Activated CD8-positive, alpha-beta T cell treated with anti-CD3 and anti-CD28 coated beads, Interleukin-2, amount 10 ng/mL, durations not matched to agents 7 days and 5 days (primary cell): ENCODE measurements at regions of chr1 and their contacts with region 1.

Region 1: DNA sequence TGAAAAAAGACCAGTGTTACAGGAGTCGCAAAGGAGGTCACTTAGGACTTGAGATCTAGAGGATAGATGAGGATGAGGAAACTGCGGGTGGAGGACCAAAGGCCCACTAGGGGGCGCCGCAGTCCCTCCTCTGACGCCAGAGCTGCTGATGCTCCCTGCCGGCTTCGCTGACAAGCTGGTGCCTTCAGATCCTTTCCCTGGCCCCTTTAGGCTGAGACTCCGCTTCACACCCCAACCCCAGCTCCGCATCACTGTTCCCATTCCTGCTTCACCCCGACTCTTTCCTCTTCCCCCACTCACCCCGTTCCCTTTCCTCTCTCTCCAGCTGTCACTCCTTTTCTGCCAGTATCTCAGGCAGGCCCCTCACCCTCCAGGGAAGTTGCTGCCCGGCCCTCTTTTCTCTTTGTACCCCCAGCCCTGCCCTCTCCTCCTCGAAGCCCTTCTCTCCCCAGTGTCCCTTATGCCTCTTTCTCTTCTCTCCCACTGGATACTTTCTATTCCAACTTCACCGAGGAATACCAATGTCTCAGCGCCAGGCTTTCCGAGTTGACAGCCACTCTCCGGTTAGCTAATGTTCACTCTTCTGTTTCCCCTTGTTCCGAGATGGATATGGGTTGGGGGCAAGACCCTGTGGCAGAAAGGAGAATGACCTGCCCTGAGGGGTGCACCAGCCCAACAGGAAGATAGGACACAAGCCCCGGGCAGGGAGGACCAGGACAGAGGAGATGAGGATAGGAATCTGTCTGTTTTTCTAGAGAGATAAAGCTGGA is 4.5 kb downstream of the KCNJ9 start:
- DNase-seq: peak; percentile 87
- ATAC-seq: peak; percentile 76
- H3K4me3 Mint-ChIP-seq: no peak overlapping the region
- H3K27ac Mint-ChIP-seq: no peak overlapping the region
- H3K4me1 Mint-ChIP-seq: peaks cover 12% of the 10 kb centered on the region
- H3K27me3 Mint-ChIP-seq: peaks cover 20% of the 10 kb centered on the region

Region 2: DNA sequence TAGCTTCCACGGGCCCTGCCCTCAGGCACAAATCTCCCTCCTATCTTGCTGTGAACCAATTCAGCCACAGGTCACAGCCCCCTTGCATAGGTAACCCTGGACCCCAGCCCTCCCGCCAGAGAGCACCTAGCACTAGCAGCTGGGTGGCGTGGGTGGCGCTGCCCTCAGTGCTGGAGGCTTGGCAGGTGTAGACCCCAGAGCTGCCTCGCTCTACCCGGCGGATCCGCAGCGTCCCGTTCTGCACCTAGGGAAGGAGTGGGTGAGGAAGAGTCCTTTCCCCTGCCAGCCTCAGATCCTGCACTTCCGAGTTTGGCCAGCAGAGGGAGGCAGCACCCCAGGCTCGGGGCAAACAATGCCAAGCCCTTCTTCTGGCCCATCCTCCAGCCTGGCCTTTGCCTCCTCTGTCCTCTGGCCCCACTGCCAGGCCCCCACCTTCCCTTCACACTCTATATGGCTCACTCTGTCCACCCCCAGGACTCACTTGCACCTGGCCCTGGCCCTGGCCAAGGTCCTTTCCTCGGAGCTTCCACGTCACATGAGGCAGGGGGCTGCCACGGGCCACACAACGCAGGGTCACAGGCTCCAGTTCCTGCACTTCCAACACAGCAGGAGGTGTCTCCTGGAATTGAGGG is 149.5 kb before region 1 on chr1:
- CTCF ChIA-PET with region 1: interaction called, 10 read pairs
- POLR2A ChIA-PET with region 1: no interaction called
- DNase-seq: peak; percentile 83
- ATAC-seq: peak; percentile 81
- H3K4me3 Mint-ChIP-seq: no peak overlapping the region
- H3K27ac Mint-ChIP-seq: no peak overlapping the region
- H3K4me1 Mint-ChIP-seq: peaks cover 5% of the 10 kb centered on the region
- H3K27me3 Mint-ChIP-seq: peaks cover 29% of the 10 kb centered on the region

Region 3: GRCh38 chr1:160046494-160047110 is 39.3 kb before region 1 on chr1:
- CTCF ChIA-PET with region 1: interaction called, 617 read pairs
- POLR2A ChIA-PET with region 1: no interaction called
- DNase-seq: peak; percentile 61
- ATAC-seq: peak; percentile 96
- H3K4me3 Mint-ChIP-seq: peak overlapping the region; percentile 65
- H3K27ac Mint-ChIP-seq: peak overlapping the region; percentile 72
- H3K4me1 Mint-ChIP-seq: peaks cover 12% of the 10 kb centered on the region
- H3K27me3 Mint-ChIP-seq: peaks cover 28% of the 10 kb centered on the region

Region 4: DNA sequence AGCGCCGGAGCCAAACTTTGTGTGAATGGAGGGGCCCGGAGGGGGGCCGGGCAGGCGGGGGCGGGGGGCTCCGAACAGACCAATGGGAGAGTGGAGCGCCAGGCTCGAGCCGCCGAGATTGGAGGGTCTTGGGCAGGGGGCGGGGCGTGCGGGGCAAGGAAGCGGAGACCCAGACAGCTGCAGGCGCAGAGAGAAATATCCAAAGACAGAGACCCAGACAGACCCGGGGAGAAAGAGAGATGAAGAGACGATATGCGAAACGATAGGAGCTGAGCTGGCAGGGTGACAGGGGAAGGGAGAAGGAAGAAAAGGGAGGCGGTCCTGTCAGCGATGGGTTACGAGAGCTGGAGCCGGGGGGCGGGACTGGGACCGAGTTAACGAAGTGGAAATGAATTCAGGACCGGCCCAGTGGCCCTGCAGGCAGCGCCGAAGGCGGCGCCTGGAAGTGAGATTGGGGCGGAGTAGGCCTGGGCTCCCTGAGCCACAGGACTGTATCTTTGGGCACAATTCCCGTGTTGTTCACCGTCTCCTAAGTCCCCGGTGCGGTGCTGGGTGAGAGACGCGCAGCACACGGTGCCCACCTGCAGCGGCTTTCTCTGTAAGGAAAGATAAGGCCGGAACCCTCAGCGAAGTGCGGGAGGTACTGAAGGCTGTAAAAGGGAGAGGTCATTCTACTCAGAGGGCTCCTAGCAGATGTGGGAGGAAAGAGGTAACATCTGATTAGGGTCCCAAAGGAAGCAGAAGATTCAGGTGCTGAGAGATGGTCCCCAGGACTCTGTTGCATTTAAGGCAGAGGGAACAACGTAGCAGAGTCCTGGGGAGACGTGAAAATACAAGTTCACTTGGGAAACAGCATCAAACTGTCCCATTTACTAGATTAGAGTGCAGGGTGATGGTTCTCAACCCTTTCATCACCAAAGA is 15.4 kb before region 1 on chr1:
- CTCF ChIA-PET with region 1: interaction called, 617 read pairs
- POLR2A ChIA-PET with region 1: no interaction called
- DNase-seq: peak; percentile 67
- ATAC-seq: peak; percentile 91
- H3K4me3 Mint-ChIP-seq: peak overlapping the region; percentile 66
- H3K27ac Mint-ChIP-seq: no peak overlapping the region
- H3K4me1 Mint-ChIP-seq: peaks cover 14% of the 10 kb centered on the region
- H3K27me3 Mint-ChIP-seq: peaks cover 55% of the 10 kb centered on the region

Region 5: DNA sequence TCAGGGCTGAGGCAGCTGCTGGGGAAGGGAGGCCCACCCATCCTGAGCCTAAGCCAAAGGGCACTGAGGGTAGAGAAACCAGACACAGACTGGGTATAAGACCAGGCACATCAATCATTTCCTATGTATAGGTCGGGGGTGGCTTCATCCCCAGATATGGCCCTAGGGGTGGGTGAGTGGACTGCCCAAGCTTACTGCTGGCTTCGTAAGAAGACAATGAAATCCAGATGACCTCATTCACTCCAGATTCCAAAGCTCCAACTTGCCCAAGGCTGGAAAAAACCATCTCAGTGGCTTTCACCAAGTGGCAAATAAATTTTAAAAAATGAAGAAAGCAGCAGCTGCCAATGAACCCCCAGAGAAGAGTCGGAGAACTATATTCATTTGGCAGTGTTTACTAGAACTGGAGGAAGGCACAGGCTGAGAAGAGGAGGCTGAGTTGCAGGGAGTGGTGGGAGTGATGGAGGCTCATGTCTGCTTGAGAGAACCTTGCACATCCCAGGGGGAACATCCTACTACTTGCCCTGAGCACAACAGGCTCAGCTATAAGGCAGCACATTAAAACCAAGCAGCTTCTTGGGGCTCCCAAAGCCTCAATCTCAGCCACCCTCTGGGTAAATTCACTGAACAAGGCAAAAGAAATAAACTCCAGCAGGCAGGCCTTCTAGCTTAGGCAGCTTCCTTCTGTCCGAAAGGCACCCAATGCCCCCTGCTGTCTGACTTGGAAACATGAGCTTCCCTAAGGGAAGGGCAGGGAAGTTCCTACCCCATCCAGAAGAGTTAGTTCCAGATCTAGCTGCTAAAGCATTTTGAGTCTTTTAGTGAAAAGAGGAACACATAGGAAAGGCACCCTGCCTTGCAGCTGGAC is 133.4 kb after region 1 on chr1:
- CTCF ChIA-PET with region 1: no interaction called
- POLR2A ChIA-PET with region 1: no interaction called
- DNase-seq: no peak
- ATAC-seq: no peak
- H3K4me3 Mint-ChIP-seq: no peak overlapping the region
- H3K27ac Mint-ChIP-seq: no peak overlapping the region
- H3K4me1 Mint-ChIP-seq: no peaks in the 10 kb centered on the region
- H3K27me3 Mint-ChIP-seq: no peaks in the 10 kb centered on the region

Region 6: GRCh38 chr1:160376525-160377131 is 290.8 kb after region 1 on chr1:
- CTCF ChIA-PET with region 1: interaction called, 15 read pairs
- POLR2A ChIA-PET with region 1: no interaction called
- DNase-seq: peak; percentile 55
- ATAC-seq: peak; percentile 73
- H3K4me3 Mint-ChIP-seq: no peak overlapping the region
- H3K27ac Mint-ChIP-seq: no peak overlapping the region
- H3K4me1 Mint-ChIP-seq: peaks cover 13% of the 10 kb centered on the region
- H3K27me3 Mint-ChIP-seq: peaks cover 8% of the 10 kb centered on the region